ENCODE measurements at regions of chr3 and their contacts with region 1.

Region 1: DNA sequence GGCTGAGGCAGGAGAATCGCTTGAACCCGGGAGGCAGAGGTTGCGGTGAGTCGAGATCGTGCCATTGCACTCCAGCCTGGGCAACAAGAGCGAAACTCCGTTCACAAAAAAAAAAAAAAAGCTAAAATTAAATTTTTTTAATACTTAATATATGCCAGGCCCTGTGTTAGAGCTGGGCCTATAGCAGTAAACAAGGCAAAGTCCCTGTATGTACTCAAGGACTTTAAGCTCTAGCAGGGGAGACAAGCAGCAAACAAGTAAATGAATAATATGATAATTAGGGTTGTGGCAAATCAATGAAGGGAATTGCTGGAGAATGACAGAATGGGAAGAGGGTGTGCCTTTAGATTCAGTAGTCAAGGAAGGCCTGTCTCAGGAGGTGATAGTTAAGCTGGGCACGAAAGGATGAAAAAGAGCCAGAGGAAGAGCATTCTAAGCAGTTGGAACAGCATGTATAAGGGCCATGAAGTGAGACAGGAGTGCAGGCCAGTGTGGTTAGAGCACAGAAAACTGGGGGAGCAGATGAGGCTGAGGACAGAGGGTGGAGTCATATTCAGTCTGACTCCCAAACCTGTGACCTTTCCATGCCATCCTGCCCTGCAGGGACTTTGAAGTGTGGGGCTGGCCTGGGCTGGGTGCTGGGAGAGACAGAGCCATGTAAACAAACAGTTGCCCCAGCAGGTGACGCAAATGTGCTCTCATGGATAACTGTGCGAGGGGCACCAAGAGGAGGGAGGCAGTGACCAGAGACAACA is 6.6 kb upstream of the RAF1 start:
- DNase-seq: no peak
- H3K4me3 ChIP-seq: no peak overlapping the region
- CTCF ChIP-seq: no peak
- POLR2A ChIP-seq: no peak

Region 2: DNA sequence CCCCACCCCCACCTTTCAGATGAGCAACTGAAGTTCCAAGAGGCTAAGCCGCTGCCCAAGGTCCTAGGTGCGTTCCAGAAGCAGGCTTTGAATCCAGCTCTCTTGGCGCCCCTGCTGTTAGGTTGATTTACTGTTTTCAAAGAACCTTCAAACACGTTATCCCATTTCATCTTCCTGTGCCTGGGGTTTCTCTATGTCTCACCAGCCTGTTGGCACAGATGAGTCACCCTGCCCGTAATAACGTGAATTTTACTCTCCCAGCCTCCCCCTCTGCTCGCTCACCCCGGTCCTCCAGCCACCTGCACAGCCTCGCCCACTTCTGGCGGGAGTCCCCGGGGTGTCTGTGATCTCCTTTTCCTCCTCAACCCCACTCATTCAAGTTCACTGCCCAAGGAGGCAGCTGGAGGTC is 199.3 kb before region 1 on chr3:
- intact Hi-C with region 1: no loop called
- DNase-seq: no peak
- H3K4me3 ChIP-seq: no peak overlapping the region
- CTCF ChIP-seq: no peak
- POLR2A ChIP-seq: no peak

Region 3: GRCh38 chr3:12689993-12690617 is 19.6 kb after region 1 on chr3:
- intact Hi-C with region 1: loop called (anchors 1 kb)
- DNase-seq: no peak
- H3K4me3 ChIP-seq: no peak overlapping the region
- CTCF ChIP-seq: no peak
- POLR2A ChIP-seq: no peak

Measured in lower leg skin (tissue), 4 donors.